MCF 10A (cell line): ENCODE measurements at regions of chr12 and their contacts with region 1.

Region 1: GRCh38 chr12:94101738-94102660 is 46.4 kb upstream of the PLXNC1 start:
- DNase-seq: peak; percentile 92
- H3K4me3 Mint-ChIP-seq: peak overlapping the region; percentile 75
- H3K27ac Mint-ChIP-seq: no peak overlapping the region
- H3K4me1 Mint-ChIP-seq: peaks cover 46% of the 10 kb centered on the region
- H3K27me3 Mint-ChIP-seq: no peaks in the 10 kb centered on the region
- CTCF ChIP-seq: peak; percentile 80

Region 2: GRCh38 chr12:93419388-93420034 is 682.5 kb before region 1 on chr12:
- CTCF ChIA-PET with region 1: interaction called, 8 read pairs
- POLR2A ChIA-PET with region 1: interaction called, 4 read pairs
- intact Hi-C with region 1: loop called (anchors 10 kb)
- DNase-seq: peak; percentile 49
- H3K4me3 Mint-ChIP-seq: no peak overlapping the region
- H3K27ac Mint-ChIP-seq: no peak overlapping the region
- H3K4me1 Mint-ChIP-seq: peaks cover 32% of the 10 kb centered on the region
- H3K27me3 Mint-ChIP-seq: no peaks in the 10 kb centered on the region
- CTCF ChIP-seq: peak; percentile 43

Region 3: DNA sequence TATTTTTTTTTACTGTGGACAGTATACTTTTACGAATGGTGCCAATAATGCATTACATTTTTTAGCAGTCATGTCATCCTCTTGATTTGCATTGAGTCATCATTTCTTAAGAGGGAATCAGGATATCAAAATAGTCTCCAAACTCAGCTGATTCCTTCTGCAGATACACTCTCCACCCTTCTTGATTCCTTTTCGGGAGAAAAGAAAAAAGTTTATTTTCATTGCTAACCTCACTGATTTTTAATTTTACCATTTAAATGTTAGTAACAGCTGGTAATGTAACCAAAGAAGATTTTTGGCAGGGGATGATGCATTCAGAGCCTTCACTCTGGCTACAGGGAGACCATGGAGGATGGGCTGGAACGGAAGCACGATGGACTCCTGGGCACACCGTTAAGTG is 587.1 kb before region 1 on chr12:
- CTCF ChIA-PET with region 1: interaction called, 23 read pairs
- POLR2A ChIA-PET with region 1: interaction called, 4 read pairs
- intact Hi-C with region 1: no loop called
- DNase-seq: peak; percentile 36
- H3K4me3 Mint-ChIP-seq: no peak overlapping the region
- H3K27ac Mint-ChIP-seq: no peak overlapping the region
- H3K4me1 Mint-ChIP-seq: peaks cover 9% of the 10 kb centered on the region
- H3K27me3 Mint-ChIP-seq: no peaks in the 10 kb centered on the region
- CTCF ChIP-seq: no peak

Region 4: DNA sequence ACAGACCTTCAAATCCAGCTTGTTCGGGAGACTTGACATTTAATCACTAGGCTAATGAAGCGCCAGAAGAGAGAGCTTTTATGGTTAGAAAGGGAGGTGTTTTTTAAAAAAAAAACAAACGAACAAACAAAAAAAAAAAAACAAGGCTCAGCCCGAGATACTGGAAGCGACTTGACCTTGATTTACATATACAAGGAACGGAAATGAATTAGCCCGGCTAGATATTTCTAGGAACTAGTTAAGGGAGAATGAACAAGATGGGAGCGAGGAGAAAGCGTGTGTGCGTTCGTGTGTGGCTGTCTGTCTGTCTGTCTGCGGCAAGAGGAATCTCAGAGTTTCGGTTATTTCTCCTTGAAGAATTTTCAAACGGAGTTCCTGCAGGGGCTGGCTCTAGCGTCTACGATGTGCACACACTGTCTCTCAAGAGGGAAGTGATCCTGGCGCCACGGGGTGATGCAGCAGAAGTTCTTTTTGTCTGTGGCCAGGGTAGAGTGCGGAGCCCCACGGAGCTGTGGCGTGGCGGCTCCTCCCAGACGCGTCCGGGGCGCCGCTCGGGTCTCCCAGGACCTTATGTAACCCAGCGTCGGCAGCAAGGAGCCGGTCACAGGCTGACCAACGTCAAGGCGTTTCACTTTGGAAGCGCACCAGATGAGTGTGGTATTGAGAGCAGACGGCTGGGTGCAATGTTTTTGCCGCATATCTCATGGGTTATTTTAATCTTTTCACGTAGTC is 510.7 kb before region 1 on chr12:
- CTCF ChIA-PET with region 1: interaction called, 8 read pairs
- POLR2A ChIA-PET with region 1: interaction called, 13 read pairs
- intact Hi-C with region 1: loop called (anchors 1 kb)
- DNase-seq: peak; percentile 78
- H3K4me3 Mint-ChIP-seq: peak overlapping the region; percentile 95
- H3K27ac Mint-ChIP-seq: peak overlapping the region; percentile 93
- H3K4me1 Mint-ChIP-seq: peaks cover 4% of the 10 kb centered on the region
- H3K27me3 Mint-ChIP-seq: no peaks in the 10 kb centered on the region
- CTCF ChIP-seq: no peak

Region 5: DNA sequence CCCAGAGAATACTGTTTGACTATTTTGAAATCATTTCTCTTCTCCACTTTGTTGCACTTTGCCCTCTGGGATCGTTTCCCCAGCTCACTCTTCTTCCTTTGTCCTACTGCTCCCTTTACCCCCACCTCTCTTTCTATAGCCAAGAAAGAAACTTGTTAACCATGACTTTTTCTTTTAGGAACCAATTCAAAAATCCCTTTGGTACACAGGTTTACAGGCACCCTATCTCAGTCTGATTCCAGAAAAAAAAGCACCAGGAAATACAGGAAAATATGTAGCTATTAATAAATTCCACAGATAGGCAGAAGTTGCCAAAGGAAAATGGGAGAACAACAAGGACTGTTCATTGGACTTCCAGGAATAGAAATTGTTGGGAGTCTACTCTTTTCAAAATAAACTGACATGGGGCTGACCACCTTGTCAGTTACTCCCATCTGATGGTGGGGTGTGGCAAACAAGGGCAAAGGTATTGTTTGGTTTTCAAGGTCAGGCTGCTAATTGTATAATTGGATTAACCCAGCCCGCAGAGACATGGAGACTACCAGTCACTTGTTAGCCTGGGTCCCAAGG is 342.4 kb before region 1 on chr12:
- CTCF ChIA-PET with region 1: interaction called, 230 read pairs
- POLR2A ChIA-PET with region 1: interaction called, 6 read pairs
- intact Hi-C with region 1: no loop called
- DNase-seq: no peak
- H3K4me3 Mint-ChIP-seq: no peak overlapping the region
- H3K27ac Mint-ChIP-seq: no peak overlapping the region
- H3K4me1 Mint-ChIP-seq: peaks cover 15% of the 10 kb centered on the region
- H3K27me3 Mint-ChIP-seq: no peaks in the 10 kb centered on the region
- CTCF ChIP-seq: no peak

Region 6: DNA sequence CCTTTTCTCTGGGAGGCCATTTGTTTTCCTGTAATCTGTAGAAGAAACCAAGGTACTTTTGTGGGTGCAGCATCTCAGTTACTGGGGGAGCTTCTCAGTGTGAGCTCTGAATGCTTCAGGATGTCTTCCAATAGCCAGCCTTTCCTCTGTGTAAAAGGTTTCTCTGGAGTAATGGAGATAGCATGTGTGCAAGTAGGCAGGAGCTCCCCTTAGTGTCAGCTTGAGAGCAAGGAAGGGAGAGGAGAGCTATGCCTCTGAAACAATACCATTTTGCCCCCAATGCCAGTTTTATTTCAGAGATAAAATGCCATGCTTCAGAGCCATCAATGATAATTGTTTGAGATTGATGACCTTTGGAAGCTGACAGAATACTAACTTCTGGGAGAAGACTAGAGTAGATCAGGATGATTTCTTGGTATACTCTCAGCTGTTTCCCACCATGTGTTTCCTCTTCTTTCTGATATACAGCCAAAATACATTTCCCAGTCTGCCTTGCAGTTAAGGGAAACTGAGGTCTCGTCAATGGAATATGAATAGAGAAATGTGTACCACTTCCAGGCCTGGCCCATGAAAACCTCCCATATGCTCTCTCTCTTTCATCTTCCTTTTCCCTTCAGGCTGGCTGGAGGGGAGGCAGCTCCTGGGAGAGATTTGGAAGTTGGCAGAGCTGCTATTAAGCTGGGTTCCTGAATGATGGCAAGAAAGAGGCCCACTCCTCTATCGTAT is 299.1 kb before region 1 on chr12:
- CTCF ChIA-PET with region 1: interaction called, 15 read pairs
- POLR2A ChIA-PET with region 1: interaction called, 7 read pairs
- intact Hi-C with region 1: no loop called
- DNase-seq: peak; percentile 42
- H3K4me3 Mint-ChIP-seq: peak overlapping the region; percentile 25
- H3K27ac Mint-ChIP-seq: peak overlapping the region; percentile 91
- H3K4me1 Mint-ChIP-seq: peaks cover 56% of the 10 kb centered on the region
- H3K27me3 Mint-ChIP-seq: no peaks in the 10 kb centered on the region
- CTCF ChIP-seq: no peak

Region 7: GRCh38 chr12:94047741-94048567 is 54.0 kb before region 1 on chr12:
- CTCF ChIA-PET with region 1: interaction called, 9 read pairs
- POLR2A ChIA-PET with region 1: interaction called, 19 read pairs
- intact Hi-C with region 1: no loop called
- DNase-seq: no peak
- H3K4me3 Mint-ChIP-seq: no peak overlapping the region
- H3K27ac Mint-ChIP-seq: peak overlapping the region; percentile 66
- H3K4me1 Mint-ChIP-seq: peaks cover 28% of the 10 kb centered on the region
- H3K27me3 Mint-ChIP-seq: no peaks in the 10 kb centered on the region
- CTCF ChIP-seq: no peak